ENCODE measurements at regions of chr3 and their contacts with region 1.

Region 1: GRCh38 chr3:30480587-30480986 is 125.8 kb upstream of the TGFBR2 start:
- DNase-seq: no peak
- H3K4me3 ChIP-seq: no peak overlapping the region
- H3K27ac ChIP-seq: no peak overlapping the region
- H3K4me1 ChIP-seq: peaks cover 8% of the 10 kb centered on the region
- H3K27me3 ChIP-seq: no peaks in the 10 kb centered on the region
- CTCF ChIP-seq: no peak

Region 2: GRCh38 chr3:30437171-30437601 is 43.4 kb before region 1 on chr3:
- CTCF ChIA-PET with region 1: no interaction called
- dilution Hi-C with region 1: no loop called
- in situ Hi-C with region 1: no loop called
- intact Hi-C with region 1: loop called (anchors 1 kb)
- DNase-seq: peak; percentile 11
- H3K4me3 ChIP-seq: no peak overlapping the region
- H3K27ac ChIP-seq: no peak overlapping the region
- H3K4me1 ChIP-seq: peaks cover 16% of the 10 kb centered on the region
- H3K27me3 ChIP-seq: no peaks in the 10 kb centered on the region
- CTCF ChIP-seq: no peak

Region 3: GRCh38 chr3:30596161-30596560 is 115.6 kb after region 1 on chr3:
- CTCF ChIA-PET with region 1: no interaction called
- dilution Hi-C with region 1: no loop called
- in situ Hi-C with region 1: no loop called
- intact Hi-C with region 1: no loop called
- DNase-seq: peak; percentile 78
- H3K4me3 ChIP-seq: no peak overlapping the region
- H3K27ac ChIP-seq: peak overlapping the region; percentile 100
- H3K4me1 ChIP-seq: peaks cover 35% of the 10 kb centered on the region
- H3K27me3 ChIP-seq: no peaks in the 10 kb centered on the region
- CTCF ChIP-seq: no peak